ENCODE measurements at regions of chr11 and their contacts with region 1.

Region 1: DNA sequence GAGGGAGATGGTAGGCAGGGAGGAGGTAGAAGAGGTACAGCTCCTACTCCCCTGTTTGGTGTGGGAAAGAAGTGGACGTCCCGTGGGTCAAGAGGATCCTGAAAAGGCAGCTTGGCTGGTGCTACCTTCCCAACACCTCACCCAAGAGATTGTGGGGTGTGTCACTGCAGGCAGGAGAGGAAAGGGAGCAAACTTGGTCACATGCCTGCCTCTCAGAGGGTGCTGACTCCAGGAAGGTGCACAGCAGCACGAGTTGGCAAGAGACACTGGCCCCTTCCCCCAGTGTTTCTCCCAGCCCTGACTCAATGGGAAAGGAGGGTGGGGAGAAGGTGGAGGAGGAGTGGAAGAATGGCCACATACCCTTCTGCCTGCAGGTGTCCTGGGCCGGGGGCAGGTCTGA is 99.6 kb downstream of the CSNK2A3 start:
- DNase-seq: no peak
- ATAC-seq: no peak
- H3K4me3 ChIP-seq: no peak overlapping the region
- H3K4me3 Mint-ChIP-seq: no peak overlapping the region
- H3K27ac ChIP-seq: no peak overlapping the region
- H3K27ac Mint-ChIP-seq: no peak overlapping the region
- H3K4me1 ChIP-seq: no peaks in the 10 kb centered on the region
- H3K4me1 Mint-ChIP-seq: no peaks in the 10 kb centered on the region
- H3K27me3 ChIP-seq: no peaks in the 10 kb centered on the region
- H3K27me3 Mint-ChIP-seq: no peaks in the 10 kb centered on the region
- CTCF ChIP-seq: no peak

Region 2: DNA sequence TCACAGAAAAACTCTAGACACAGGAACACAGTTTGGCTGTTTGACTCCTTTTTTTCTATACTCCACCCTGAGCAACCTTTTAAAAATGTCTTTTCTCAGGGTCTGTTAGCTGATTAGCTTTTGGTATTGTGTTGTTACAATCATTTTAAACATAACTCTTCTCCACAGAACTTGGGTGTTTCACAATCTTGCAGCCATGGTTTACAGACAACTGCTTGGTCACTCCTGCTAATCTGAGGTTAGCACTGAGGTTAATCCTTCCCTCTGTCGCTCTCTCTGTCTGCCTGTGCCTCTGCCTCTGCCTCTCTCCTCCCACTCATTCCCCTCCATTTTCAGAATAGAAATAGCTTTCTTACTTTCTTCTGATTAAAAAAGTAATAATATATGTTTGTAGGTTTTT is 333.3 kb before region 1 on chr11:
- CTCF ChIA-PET with region 1: no interaction called
- POLR2A ChIA-PET with region 1: no interaction called
- intact Hi-C with region 1: no loop called
- DNase-seq: peak in 1 of 9 experiments; percentile 13
- ATAC-seq: no peak
- H3K4me3 ChIP-seq: no peak overlapping the region
- H3K4me3 Mint-ChIP-seq: no peak overlapping the region
- H3K27ac ChIP-seq: no peak overlapping the region
- H3K27ac Mint-ChIP-seq: no peak overlapping the region
- H3K4me1 ChIP-seq: no peaks in the 10 kb centered on the region
- H3K4me1 Mint-ChIP-seq: no peaks in the 10 kb centered on the region
- H3K27me3 ChIP-seq: no peaks in the 10 kb centered on the region
- H3K27me3 Mint-ChIP-seq: no peaks in the 10 kb centered on the region
- CTCF ChIP-seq: no peak

Region 3: DNA sequence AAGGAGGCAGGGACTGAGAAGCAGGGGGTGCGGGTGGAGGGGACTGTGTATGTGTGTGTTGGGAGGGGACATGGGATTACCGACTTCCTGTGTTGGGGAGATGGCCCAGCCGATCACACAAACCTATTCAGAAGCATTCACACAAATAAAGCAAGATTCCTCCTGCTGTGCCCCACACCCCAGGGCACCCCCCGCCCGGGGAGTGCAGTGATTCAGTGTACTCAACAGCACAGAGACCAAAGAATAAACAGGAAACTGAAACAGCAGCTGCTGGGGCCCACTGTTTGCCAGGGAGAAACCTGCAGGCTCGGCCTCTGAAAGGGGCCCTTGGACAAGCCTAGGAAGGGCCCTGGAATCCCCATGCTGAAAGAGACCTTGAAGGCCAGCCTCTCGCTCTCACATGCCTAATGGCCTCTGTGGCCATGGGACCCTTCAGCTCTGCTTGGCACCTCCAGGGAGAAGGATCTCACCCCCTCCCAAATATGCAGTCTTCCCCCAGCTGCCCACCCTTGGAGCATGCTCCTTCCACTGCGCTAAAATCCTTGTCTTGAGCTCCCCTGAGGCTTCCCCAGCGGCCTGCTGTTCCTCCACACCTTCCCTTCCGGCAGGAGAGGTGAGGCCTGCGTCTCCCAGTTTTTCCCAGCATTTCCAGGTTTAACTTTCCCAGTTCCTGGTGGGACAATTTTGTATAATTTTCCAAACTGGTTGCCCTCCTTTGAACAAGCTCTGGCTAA is 26.6 kb after region 1 on chr11:
- CTCF ChIA-PET with region 1: no interaction called
- POLR2A ChIA-PET with region 1: no interaction called
- intact Hi-C with region 1: loop called in 1 of 2 experiments (anchors 1 kb)
- DNase-seq: peak in 1 of 9 experiments; percentile 43
- ATAC-seq: no peak
- H3K4me3 ChIP-seq: no peak overlapping the region
- H3K4me3 Mint-ChIP-seq: no peak overlapping the region
- H3K27ac ChIP-seq: no peak overlapping the region
- H3K27ac Mint-ChIP-seq: no peak overlapping the region
- H3K4me1 ChIP-seq: no peaks in the 10 kb centered on the region
- H3K4me1 Mint-ChIP-seq: no peaks in the 10 kb centered on the region
- H3K27me3 ChIP-seq: no peaks in the 10 kb centered on the region
- H3K27me3 Mint-ChIP-seq: peaks cover 9% of the 10 kb centered on the region
- CTCF ChIP-seq: no peak

Region 4: GRCh38 chr11:11407065-11407762 is 153.7 kb after region 1 on chr11:
- CTCF ChIA-PET with region 1: no interaction called
- POLR2A ChIA-PET with region 1: no interaction called
- intact Hi-C with region 1: no loop called
- DNase-seq: no peak
- ATAC-seq: no peak
- H3K4me3 ChIP-seq: no peak overlapping the region
- H3K4me3 Mint-ChIP-seq: no peak overlapping the region
- H3K27ac ChIP-seq: no peak overlapping the region
- H3K27ac Mint-ChIP-seq: no peak overlapping the region
- H3K4me1 ChIP-seq: no peaks in the 10 kb centered on the region
- H3K4me1 Mint-ChIP-seq: no peaks in the 10 kb centered on the region
- H3K27me3 ChIP-seq: no peaks in the 10 kb centered on the region
- H3K27me3 Mint-ChIP-seq: peaks cover 11% of the 10 kb centered on the region
- CTCF ChIP-seq: no peak

Measured in CD8-positive, alpha-beta T cell (primary cell).